Posterior vena cava (tissue), 2 donors: ENCODE measurements at regions of chr5 and their contacts with region 1.

Region 1: DNA sequence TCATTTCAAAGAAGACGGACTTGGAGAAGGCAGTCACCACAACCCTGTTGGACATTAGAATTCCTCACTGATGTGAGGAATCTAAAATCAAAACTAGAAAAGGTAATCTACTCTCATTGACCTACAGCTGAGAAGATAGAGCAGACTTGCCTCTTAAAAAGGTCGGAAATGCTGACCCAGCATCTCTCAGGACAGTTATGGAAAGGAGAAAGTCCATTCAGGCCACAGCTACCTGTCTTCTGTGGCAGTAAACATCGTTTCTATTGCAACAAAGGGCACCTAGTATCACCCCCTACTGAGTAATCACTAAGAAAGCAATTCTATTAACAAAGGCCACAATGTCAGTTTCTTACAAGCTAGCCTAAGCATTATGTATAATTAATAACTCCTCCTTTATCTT is 601.7 kb downstream of the PRELID2 start:
- DNase-seq: no peak

Region 2: DNA sequence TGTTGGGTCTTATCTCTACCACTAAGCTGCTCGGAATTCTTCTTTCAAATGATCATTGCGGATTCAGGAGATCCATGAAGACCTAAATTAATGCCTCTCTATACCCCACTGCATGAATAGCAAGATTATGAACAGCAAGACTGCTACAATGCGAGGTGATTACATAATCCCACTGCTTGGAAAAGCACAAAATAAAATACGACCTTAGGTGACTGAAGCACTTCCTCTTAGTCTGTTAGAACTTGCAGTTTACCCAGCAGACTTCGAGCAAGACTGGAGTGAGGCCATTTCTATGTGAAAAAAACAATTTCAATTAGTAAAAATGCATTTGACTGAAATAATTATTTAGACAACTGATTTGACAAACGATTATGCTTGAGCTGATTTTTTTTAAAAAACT is 762.7 kb after region 1 on chr5:
- intact Hi-C with region 1: loop called in 1 of 2 experiments (anchors 5 kb)
- DNase-seq: no peak